HEK293 (cell line): ENCODE measurements at regions of chr11 and their contacts with region 1.

Region 1: DNA sequence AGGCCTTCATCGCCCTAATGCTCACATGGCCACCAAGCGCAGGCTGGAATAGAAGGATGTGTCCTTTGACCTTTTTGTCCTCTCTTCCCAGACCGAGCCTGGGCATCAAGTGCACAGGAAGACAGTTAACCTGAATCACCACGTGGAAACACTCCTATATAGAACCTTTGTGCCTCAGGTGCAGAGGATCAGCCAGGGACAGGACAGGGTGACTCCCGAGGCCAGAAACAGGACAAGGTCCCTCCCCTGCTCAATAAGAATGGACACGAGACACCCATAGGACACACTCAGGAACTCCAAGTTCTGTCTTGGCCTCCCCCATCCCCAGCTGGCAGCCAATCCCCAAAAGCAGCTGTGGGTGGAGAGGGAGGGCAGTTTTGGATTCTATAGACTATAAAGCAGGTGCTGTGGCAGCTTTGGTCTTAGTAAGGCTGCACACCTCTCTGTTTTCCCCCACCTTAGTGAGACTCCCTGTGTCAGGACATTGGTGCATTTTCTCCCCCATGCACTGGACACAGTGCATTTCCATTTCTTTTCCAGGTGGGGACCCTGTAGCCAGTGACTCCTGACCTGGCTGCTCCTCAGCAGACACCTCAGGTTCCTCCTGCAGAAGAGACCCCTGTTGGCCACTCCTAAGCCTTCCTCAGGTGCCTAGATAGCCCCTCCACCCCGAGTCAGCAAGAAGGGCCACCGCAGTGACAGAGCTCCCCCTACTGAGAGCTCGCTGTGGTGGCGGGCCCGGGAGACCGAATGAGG is 43.6 kb upstream of the POU2AF1 start:
- H3K4me3 ChIP-seq: no peak overlapping the region
- H3K27ac ChIP-seq: no peak overlapping the region
- H3K4me1 ChIP-seq: peaks cover 2% of the 10 kb centered on the region; the same call in 1 of the 2 replicates
- CTCF ChIP-seq: peak; percentile 91

Region 2: DNA sequence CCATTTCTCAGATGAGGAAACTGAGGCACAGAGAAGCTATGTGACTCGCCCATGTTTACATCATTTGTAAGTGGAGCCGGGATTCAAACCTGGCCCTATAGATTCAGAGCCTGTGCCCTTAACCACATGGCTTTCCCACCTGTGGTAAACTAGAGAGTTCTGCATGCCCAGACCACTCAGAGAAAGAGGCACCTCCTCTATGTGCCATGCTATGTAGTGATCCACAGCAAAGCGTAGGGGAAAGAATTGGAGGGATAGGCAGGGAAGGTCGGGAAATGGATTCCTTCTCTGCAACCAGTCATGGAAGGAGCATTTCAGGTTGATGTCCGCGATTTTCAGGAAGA is 192.6 kb before region 1 on chr11:
- CTCF ChIA-PET with region 1: interaction called, 12 read pairs
- POLR2A ChIA-PET with region 1: no interaction called
- H3K4me3 ChIP-seq: no peak overlapping the region
- H3K27ac ChIP-seq: no peak overlapping the region
- H3K4me1 ChIP-seq: no peaks in the 10 kb centered on the region
- CTCF ChIP-seq: no peak

Region 3: GRCh38 chr11:111283945-111284481 is 138.7 kb before region 1 on chr11:
- CTCF ChIA-PET with region 1: interaction called, 122 read pairs
- POLR2A ChIA-PET with region 1: interaction called, 3 read pairs
- H3K4me3 ChIP-seq: no peak overlapping the region
- H3K27ac ChIP-seq: no peak overlapping the region
- H3K4me1 ChIP-seq: no peaks in the 10 kb centered on the region
- CTCF ChIP-seq: no peak

Region 4: DNA sequence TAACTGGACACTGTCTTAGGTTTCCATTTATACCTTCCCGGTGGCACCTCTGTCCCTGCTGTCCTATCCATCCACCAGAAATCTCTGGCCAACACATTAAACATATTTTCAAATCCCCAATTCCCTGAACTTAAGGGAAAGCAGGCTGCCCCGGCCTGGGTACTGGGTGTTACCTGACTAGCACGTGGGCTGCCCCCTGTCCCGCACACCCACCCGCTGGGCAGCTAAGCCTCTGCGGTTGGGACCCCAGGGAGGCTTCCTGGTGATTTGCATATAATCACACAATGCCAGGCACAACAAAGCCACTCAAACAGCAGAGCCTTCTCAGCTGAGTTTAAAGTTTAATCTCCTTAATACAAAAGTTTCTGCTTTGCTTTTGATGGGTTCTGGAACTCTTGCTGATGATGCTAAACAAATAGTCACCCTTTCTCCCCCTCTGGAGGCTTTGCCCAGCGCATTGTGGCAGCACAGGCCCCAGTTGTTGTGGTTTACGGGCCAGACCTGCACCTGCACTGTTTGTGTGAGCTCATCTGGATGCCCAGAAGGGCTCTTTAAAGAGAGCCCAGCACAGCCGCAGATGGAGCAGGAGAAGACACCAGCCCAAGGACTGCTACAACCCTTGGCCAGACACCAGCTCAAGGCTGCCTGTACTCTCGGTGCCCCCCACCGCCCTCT is 16.3 kb after region 1 on chr11:
- CTCF ChIA-PET with region 1: interaction called, 12 read pairs
- POLR2A ChIA-PET with region 1: no interaction called
- H3K4me3 ChIP-seq: no peak overlapping the region
- H3K27ac ChIP-seq: no peak overlapping the region
- H3K4me1 ChIP-seq: no peaks in the 10 kb centered on the region
- CTCF ChIP-seq: no peak

Region 5: GRCh38 chr11:111446404-111447111 is 23.9 kb after region 1 on chr11:
- CTCF ChIA-PET with region 1: interaction called, 31 read pairs
- POLR2A ChIA-PET with region 1: no interaction called
- H3K4me3 ChIP-seq: no peak overlapping the region
- H3K27ac ChIP-seq: no peak overlapping the region
- H3K4me1 ChIP-seq: no peaks in the 10 kb centered on the region
- CTCF ChIP-seq: peak; percentile 81